ENCODE measurements at regions of chr4 and their contacts with region 1.

Region 1: GRCh38 chr4:70687821-70688794 is at the start of gene UTP3:
- DNase-seq: peak; percentile 99
- H3K4me3 ChIP-seq: peak within 1 kb of the TSS; percentile 63 to 80 (median 75)
- H3K27ac ChIP-seq: peak within 1 kb of the TSS; percentile 70
- H3K4me1 ChIP-seq: peaks cover 19% of the 10 kb centered on the region
- H3K27me3 ChIP-seq: no peaks in the 10 kb centered on the region
- CTCF ChIP-seq: peak; percentile 95 to 96
- total RNA-seq, gene UTP3: 14.3 to 40.0 TPM

Region 2: DNA sequence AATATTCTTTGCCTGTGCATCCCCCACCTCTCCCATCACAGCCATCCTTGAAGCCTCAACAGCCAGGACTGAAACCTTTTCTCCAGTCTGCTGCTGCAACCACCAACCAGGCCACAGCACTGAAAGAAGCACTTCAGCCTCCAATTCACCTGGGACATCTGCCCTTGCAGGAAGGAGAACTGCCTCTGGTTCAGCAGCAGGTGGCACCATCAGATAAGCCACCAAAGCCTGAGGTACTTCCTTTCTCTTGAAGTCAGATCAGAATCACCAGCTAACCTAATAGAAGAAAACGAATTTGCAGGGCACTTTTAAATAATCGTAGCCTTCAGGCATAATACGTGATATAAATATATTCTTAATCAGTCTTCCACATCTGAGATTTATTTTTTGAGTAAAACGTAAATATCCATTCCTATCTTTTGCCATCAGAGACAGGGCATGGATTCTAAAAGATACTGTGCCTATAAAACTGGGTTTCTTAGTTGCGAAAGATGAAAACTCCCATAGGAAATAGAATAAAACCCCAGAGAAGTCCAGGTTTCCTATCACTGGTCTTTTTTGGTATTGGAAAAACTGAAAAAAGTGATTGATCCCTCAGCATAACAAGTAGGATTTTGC is 86.6 kb before region 1 on chr4:
- CTCF ChIA-PET with region 1: no interaction called
- dilution Hi-C with region 1: no loop called
- in situ Hi-C with region 1: no loop called
- intact Hi-C with region 1: loop called (anchors 2 kb)
- DNase-seq: peak; percentile 54
- H3K4me3 ChIP-seq: no peak overlapping the region
- H3K27ac ChIP-seq: no peak overlapping the region
- H3K4me1 ChIP-seq: no peaks in the 10 kb centered on the region
- H3K27me3 ChIP-seq: no peaks in the 10 kb centered on the region
- CTCF ChIP-seq: peak; percentile 77 to 89

Region 3: DNA sequence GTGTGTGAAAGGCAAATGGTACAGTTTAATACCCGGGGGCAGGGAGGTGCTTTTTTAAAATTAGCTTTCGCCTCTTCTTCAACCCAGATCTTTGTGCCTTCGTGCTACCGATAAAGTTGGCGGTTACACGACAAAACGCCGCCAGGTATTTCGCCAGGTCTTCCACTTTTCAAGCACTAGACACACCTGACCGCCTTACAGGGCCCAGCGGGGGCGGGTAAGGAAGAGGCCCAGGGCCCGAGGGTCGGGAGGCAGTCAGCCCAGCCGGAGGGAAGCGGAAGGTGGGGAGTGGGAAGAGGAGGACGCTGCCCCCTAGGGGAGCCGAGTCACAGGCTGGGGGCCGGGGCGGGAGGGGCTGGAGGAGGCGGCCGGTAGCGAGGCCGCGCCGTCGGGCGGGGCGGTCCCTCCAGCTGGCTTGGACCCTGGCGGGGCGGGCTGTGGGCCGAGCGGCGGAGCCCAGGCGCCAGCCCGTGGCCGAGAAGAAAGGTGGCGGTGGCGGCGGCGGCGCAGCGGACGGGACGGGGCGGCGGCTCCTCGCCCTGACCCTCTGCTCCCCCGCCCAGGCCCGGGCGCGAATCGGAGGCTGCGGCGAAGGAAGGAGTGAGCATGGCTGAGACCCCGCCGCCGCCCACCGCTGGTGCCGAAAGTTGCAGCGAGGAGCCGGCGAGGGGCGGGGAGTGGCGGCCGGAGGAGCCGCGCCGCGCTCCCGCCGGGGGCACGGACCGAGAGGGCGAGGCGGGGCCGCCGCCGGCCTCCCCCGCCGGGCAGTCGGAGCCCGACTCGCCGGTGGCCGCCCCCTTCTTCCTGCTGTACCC is 16.4 kb after region 1 on chr4:
- CTCF ChIA-PET with region 1: no interaction called
- dilution Hi-C with region 1: no loop called
- in situ Hi-C with region 1: no loop called
- intact Hi-C with region 1: loop called (anchors 1 kb)
- DNase-seq: peak; percentile 56
- H3K4me3 ChIP-seq: peak overlapping the region; percentile 67 to 83 (median 73)
- H3K27ac ChIP-seq: peak overlapping the region; percentile 73
- H3K4me1 ChIP-seq: peaks cover 27% of the 10 kb centered on the region
- H3K27me3 ChIP-seq: no peaks in the 10 kb centered on the region
- CTCF ChIP-seq: peak in 1 of 2 donors; percentile 43

Region 4: GRCh38 chr4:70901984-70902576 is 214.0 kb after region 1 on chr4 and contains the start of gene MOB1B:
- CTCF ChIA-PET with region 1: no interaction called
- dilution Hi-C with region 1: no loop called
- in situ Hi-C with region 1: no loop called
- intact Hi-C with region 1: loop called (anchors 1 kb)
- DNase-seq: peak; percentile 79
- H3K4me3 ChIP-seq: peak within 1 kb of the TSS; percentile 72 to 92 (median 90)
- H3K27ac ChIP-seq: peak within 1 kb of the TSS; percentile 44
- H3K4me1 ChIP-seq: peaks cover 16% of the 10 kb centered on the region
- H3K27me3 ChIP-seq: no peaks in the 10 kb centered on the region
- CTCF ChIP-seq: peak; percentile 3 to 53
- total RNA-seq, gene MOB1B: 28.2 to 32.3 TPM

Region 5: DNA sequence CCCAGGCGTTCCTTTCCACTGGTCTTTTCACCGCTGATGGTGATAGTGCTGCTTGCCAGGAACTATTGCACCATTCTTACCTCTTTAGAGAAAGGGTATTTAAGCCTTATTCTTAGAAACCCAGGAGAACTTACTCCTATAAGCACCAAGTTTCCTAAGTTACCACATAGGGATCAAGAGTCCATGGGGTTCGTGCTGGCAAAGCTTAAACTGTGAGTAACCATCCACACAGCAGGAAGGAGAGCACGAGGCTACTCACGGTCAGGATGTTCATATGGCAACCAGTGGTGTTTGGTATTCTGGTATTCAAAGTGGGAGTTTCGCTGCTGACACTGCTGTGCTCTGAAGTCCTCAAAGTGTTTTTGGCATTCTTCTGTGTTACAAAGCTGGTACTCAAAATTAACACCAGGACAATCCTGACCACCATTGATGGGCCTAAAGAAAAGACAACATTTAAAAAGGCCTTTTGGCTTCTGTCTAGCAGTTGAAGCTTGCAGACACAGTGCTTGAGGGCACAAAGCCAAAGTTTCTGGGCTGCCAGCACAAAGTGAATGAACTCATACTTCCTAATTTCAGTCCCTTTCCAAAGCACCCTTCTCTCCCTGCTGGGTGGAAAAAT is 1624.0 kb after region 1 on chr4:
- CTCF ChIA-PET with region 1: no interaction called
- dilution Hi-C with region 1: no loop called
- in situ Hi-C with region 1: no loop called
- intact Hi-C with region 1: loop called (anchors 10 kb)
- DNase-seq: peak; percentile 98
- H3K4me3 ChIP-seq: peak overlapping the region in 1 of 3 experiments; percentile 4
- H3K27ac ChIP-seq: peak overlapping the region; percentile 98
- H3K4me1 ChIP-seq: peaks cover 36% of the 10 kb centered on the region
- H3K27me3 ChIP-seq: no peaks in the 10 kb centered on the region
- CTCF ChIP-seq: no peak